ENCODE measurements at regions of chr6 and their contacts with region 1.

Region 1: GRCh38 chr6:145096846-145097245 is 638.5 kb downstream of the EPM2A start:
- DNase-seq: no peak
- ATAC-seq: peak in 6 of 8 donors; percentile 35 to 75 (median 58)
- H3K4me3 ChIP-seq: no peak overlapping the region
- H3K27ac ChIP-seq: peak overlapping the region in 1 of 10 donors; percentile 39
- H3K4me1 ChIP-seq: no peaks in the 10 kb centered on the region
- H3K27me3 ChIP-seq: no peaks in the 10 kb centered on the region
- CTCF ChIP-seq: no peak

Region 2: GRCh38 chr6:143346004-143346403 is 1750.8 kb before region 1 on chr6:
- intact Hi-C with region 1: loop called in 1 of 10 experiments (anchors 5 kb)
- DNase-seq: peak in 1 of 2 donors; percentile 7
- ATAC-seq: peak in 1 of 8 donors; percentile 37
- H3K4me3 ChIP-seq: no peak overlapping the region
- H3K27ac ChIP-seq: no peak overlapping the region
- H3K4me1 ChIP-seq: no peaks in the 10 kb centered on the region
- H3K27me3 ChIP-seq: no peaks in the 10 kb centered on the region
- CTCF ChIP-seq: no peak

Region 3: GRCh38 chr6:144659202-144660182 is 437.4 kb before region 1 on chr6:
- intact Hi-C with region 1: no loop called
- DNase-seq: peak in 1 of 2 donors; percentile 42
- ATAC-seq: peak in 6 of 8 donors; percentile 49 to 84 (median 68)
- H3K4me3 ChIP-seq: peak overlapping the region in 1 of 10 donors; percentile 25
- H3K27ac ChIP-seq: peak overlapping the region in 2 of 10 donors; percentile 26 to 64
- H3K4me1 ChIP-seq: peaks cover 0 to 55% (median 15%) of the 10 kb centered on the region in 9 donors
- H3K27me3 ChIP-seq: no peaks in the 10 kb centered on the region
- CTCF ChIP-seq: no peak

Region 4: DNA sequence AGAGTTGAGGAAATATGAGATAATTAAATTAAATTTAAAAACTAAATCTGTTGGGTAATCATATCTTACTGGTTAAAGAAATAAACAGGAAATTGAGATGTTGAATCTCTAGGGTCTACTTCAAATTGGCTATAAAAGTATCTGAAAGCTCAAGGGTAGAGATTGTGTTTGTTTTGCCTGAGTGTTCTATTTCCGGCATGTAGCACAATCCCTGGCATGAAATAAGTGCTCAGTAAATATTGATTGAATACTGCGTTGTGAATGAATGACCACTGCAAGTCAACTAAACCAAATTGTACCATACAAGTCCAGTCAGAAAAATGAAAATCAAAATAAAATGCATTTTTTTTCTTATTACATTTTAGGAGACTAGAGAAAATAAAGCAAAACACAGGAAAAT is 71.4 kb before region 1 on chr6:
- intact Hi-C with region 1: no loop called
- DNase-seq: no peak
- ATAC-seq: peak in 1 of 8 donors; percentile 46
- H3K4me3 ChIP-seq: no peak overlapping the region
- H3K27ac ChIP-seq: no peak overlapping the region
- H3K4me1 ChIP-seq: peaks cover 0 to 10% (median 0%) of the 10 kb centered on the region in 9 donors
- H3K27me3 ChIP-seq: no peaks in the 10 kb centered on the region
- CTCF ChIP-seq: no peak

Measured in heart right ventricle (tissue), 16 donors.